ENCODE measurements at regions of chr7 and their contacts with region 1.

Region 1: DNA sequence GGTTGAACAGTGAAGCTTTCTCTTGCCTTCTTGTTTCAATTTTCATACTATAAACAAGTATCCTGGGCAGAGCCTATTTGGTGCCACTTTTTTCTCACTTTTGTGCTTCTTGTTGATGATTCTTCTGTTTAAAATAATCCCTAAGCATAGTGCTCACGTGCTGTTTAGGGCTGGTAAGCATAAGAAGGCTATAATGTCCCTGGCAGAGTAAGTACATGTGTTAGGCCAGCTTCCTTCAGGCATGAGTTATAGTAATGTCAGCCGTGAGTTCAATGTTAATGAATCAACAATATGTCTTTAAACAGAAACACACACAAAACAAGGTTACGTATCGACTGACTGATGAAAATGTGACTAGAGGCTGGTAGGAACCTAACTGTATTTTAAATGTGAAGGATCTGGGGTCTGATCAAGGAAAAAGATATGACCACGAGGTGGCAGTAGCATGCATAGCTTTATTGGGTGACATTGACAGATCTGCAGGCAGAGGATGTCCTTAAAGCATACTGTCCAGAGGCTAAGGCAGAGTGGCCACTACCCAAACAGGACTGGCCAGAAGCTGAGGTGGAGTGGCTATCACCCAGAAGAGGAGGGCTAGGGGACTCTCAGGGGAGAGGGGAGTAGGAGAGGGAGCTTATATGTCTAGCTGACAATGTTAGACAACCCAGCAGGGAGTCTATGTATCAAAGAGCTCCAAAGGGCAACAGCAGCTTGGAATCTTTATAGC is 113.7 kb downstream of the BRAF start:
- DNase-seq: peak; percentile 53
- H3K4me3 Mint-ChIP-seq: no peak overlapping the region
- H3K27ac Mint-ChIP-seq: no peak overlapping the region
- H3K4me1 Mint-ChIP-seq: no peaks in the 10 kb centered on the region
- H3K27me3 Mint-ChIP-seq: peaks cover 2% of the 10 kb centered on the region

Region 2: DNA sequence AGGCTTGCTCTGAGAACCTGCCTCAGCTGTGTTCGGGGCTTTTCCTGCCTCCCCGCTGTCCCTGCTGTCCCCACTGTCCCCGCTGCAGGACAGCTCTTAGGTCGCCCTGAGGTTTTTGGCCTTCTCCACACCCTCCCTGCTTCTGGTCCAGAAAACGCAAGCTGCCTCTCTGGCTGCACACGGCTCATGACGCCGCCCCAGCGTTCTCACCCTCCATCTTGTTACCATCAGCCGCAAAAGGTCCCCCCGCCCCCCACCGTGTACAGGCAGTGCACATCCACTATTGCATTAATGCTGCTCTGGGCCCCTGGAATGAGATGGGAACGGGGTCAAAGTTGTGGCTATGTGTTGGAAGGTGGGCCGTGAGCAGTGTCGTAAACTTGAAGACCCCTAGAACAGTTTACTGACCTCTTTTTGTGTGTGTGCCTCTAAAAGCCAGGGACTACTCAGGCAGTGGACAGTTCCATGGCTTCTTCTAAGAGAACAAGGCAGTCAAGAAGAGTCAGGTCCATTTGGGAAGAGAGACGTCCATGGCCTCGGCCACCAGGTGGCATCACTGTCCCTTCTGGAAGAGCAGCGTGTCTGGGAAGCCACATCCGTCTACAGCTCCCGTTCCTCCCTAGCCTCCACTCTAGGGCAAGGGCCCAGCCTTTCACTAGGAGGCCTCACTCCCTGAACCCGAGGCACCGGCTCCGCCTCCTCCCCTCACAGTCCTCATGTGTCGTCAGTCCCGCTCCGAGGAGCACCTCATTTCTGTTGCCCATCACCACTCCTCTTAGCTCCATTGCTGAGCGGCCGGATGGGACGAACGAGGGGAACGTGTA is 293.2 kb before region 1 on chr7:
- intact Hi-C with region 1: loop called (anchors 1 kb)
- DNase-seq: peak; percentile 38
- H3K4me3 Mint-ChIP-seq: no peak overlapping the region
- H3K27ac Mint-ChIP-seq: no peak overlapping the region
- H3K4me1 Mint-ChIP-seq: no peaks in the 10 kb centered on the region
- H3K27me3 Mint-ChIP-seq: peaks cover 11% of the 10 kb centered on the region

Region 3: GRCh38 chr7:140983802-140984201 is 172.8 kb after region 1 on chr7:
- intact Hi-C with region 1: loop called (anchors 1 kb)
- DNase-seq: no peak
- H3K4me3 Mint-ChIP-seq: no peak overlapping the region
- H3K27ac Mint-ChIP-seq: no peak overlapping the region
- H3K4me1 Mint-ChIP-seq: no peaks in the 10 kb centered on the region
- H3K27me3 Mint-ChIP-seq: peaks cover 12% of the 10 kb centered on the region

Measured in activated T-helper 1 cell treated with anti-CD3 and anti-CD28 coated beads, Interleukin-12 subunit alpha, Interleukin-12 subunit beta, Interleukin-2, Interleukin-4 antibody, amounts not matched to agents 30 ng/mL and 10 ng/mL and 1 ng/mL, durations not matched to agents 14 hours and 24 hours and 36 hours (primary cell).